Activated CD4-positive, alpha-beta memory T cell treated with anti-CD3 and anti-CD28 coated beads, Interleukin-2, amount 10 ng/mL, durations not matched to agents 7 days and 5 days (primary cell): ENCODE measurements at regions of chr6 and their contacts with region 1.

Region 1: DNA sequence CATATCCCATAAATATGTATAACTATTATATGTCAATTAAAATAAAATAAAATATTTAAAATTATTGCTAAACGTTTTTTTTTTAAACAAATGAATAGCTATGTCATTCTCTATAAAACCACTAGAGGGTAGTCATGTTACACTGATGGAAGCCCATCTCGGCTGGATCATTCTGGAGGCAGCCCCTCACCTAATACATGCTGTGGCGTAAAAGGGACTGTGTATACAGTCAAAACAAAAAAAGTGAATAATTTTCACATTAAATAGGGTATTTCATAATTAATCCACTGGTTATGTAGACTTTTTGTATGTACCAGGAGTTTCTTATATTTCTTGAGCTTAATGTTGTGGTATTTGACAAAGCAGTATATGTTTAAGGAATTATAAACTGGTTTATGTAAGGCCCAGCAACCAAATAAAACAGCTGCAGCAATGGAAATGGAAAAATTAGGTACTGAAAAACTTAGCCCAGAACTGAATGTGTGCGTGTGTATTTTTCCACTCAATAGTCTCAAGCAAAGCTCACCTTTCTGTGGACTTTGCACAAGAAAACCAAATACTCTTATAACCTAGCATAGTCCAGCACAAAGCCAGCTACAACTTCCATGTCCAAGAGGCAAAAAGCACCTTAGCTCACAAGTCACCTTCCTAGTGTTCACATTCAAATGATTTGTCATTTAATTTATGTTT is 81.7 kb downstream of the COL9A1 start:
- DNase-seq: no peak
- H3K4me3 Mint-ChIP-seq: no peak overlapping the region
- H3K27ac Mint-ChIP-seq: no peak overlapping the region
- H3K4me1 Mint-ChIP-seq: no peaks in the 10 kb centered on the region
- H3K27me3 Mint-ChIP-seq: peaks cover 5% of the 10 kb centered on the region

Region 2: GRCh38 chr6:70210462-70210861 is 10.7 kb before region 1 on chr6:
- CTCF ChIA-PET with region 1: interaction called, 21 read pairs
- POLR2A ChIA-PET with region 1: no interaction called
- DNase-seq: no peak
- H3K4me3 Mint-ChIP-seq: no peak overlapping the region
- H3K27ac Mint-ChIP-seq: no peak overlapping the region
- H3K4me1 Mint-ChIP-seq: no peaks in the 10 kb centered on the region
- H3K27me3 Mint-ChIP-seq: peaks cover 14% of the 10 kb centered on the region

Region 3: GRCh38 chr6:70231311-70231710 is 10.1 kb after region 1 on chr6:
- CTCF ChIA-PET with region 1: interaction called, 30 read pairs
- POLR2A ChIA-PET with region 1: no interaction called
- DNase-seq: no peak
- H3K4me3 Mint-ChIP-seq: no peak overlapping the region
- H3K27ac Mint-ChIP-seq: no peak overlapping the region
- H3K4me1 Mint-ChIP-seq: no peaks in the 10 kb centered on the region
- H3K27me3 Mint-ChIP-seq: peaks cover 3% of the 10 kb centered on the region

Region 4: DNA sequence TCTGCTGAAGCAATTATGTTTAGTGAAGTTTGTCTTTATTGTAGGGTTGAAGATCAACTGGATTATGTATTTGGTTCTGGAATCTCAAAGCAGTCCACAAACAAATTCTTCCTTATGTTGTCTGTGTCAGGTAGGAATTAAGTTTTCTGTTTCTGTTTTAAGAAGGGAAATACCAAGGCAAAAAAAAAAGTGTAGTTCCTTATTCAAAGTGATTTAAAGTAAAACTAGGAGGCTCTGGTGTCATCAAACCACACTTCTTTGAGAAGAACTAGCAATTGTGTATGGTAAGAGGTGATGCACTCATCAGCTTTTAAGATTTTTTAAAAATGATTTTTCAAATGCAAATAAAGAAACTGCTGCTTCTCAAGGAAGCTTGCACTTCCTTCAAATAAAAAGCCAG is 194.1 kb after region 1 on chr6:
- CTCF ChIA-PET with region 1: no interaction called
- POLR2A ChIA-PET with region 1: no interaction called
- DNase-seq: no peak
- H3K4me3 Mint-ChIP-seq: peak overlapping the region; percentile 42
- H3K27ac Mint-ChIP-seq: peak overlapping the region; percentile 2
- H3K4me1 Mint-ChIP-seq: peaks cover 25% of the 10 kb centered on the region
- H3K27me3 Mint-ChIP-seq: peaks cover 2% of the 10 kb centered on the region